ENCODE measurements at regions of chr6 and their contacts with region 1.

Region 1: GRCh38 chr6:44475779-44476434 is 88.4 kb downstream of the CDC5L start:
- DNase-seq: peak; percentile 86
- ATAC-seq: peak; percentile 94
- H3K4me3 Mint-ChIP-seq: no peak overlapping the region
- H3K27ac Mint-ChIP-seq: no peak overlapping the region
- H3K4me1 Mint-ChIP-seq: no peaks in the 10 kb centered on the region
- H3K27me3 Mint-ChIP-seq: no peaks in the 10 kb centered on the region

Region 2: GRCh38 chr6:43105538-43106220 is 1370.2 kb before region 1 on chr6:
- CTCF ChIA-PET with region 1: no interaction called
- POLR2A ChIA-PET with region 1: no interaction called
- intact Hi-C with region 1: no loop called
- DNase-seq: no peak
- ATAC-seq: no peak
- H3K4me3 Mint-ChIP-seq: no peak overlapping the region
- H3K27ac Mint-ChIP-seq: no peak overlapping the region
- H3K4me1 Mint-ChIP-seq: no peaks in the 10 kb centered on the region
- H3K27me3 Mint-ChIP-seq: no peaks in the 10 kb centered on the region

Region 3: GRCh38 chr6:44431118-44431725 is 44.7 kb before region 1 on chr6:
- CTCF ChIA-PET with region 1: interaction called, 15 read pairs
- POLR2A ChIA-PET with region 1: no interaction called
- intact Hi-C with region 1: no loop called
- DNase-seq: peak; percentile 66
- ATAC-seq: peak; percentile 85
- H3K4me3 Mint-ChIP-seq: no peak overlapping the region
- H3K27ac Mint-ChIP-seq: no peak overlapping the region
- H3K4me1 Mint-ChIP-seq: peaks cover 2% of the 10 kb centered on the region
- H3K27me3 Mint-ChIP-seq: no peaks in the 10 kb centered on the region

Region 4: GRCh38 chr6:44489910-44490604 is 14.2 kb after region 1 on chr6:
- CTCF ChIA-PET with region 1: interaction called, 17 read pairs
- POLR2A ChIA-PET with region 1: no interaction called
- intact Hi-C with region 1: no loop called
- DNase-seq: no peak
- ATAC-seq: no peak
- H3K4me3 Mint-ChIP-seq: no peak overlapping the region
- H3K27ac Mint-ChIP-seq: no peak overlapping the region
- H3K4me1 Mint-ChIP-seq: no peaks in the 10 kb centered on the region
- H3K27me3 Mint-ChIP-seq: peaks cover 15% of the 10 kb centered on the region

Region 5: DNA sequence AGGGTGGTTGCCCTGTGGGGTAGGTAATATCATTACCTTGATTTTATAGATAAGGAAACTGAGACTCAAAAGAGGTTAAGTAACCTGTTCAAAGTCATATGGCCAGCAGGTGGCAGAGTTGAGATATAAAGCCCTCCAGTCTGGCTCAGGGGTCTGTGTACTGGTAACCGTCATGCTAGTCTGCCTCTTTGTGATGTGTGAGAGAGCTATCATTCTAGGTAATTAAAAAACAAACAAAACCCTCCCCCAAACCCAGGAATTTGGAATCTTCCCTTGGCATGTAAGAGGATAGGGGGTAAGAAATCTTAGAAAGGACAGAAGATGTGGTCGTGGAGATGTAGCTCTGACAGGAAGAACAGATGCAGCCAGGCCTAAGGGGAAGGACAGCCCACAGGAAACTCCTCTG is 117.6 kb after region 1 on chr6:
- CTCF ChIA-PET with region 1: interaction called, 5 read pairs
- POLR2A ChIA-PET with region 1: no interaction called
- intact Hi-C with region 1: loop called in 1 of 2 experiments (anchors 2 kb)
- DNase-seq: peak; percentile 80
- ATAC-seq: peak; percentile 87
- H3K4me3 Mint-ChIP-seq: no peak overlapping the region
- H3K27ac Mint-ChIP-seq: peak overlapping the region; percentile 9
- H3K4me1 Mint-ChIP-seq: peaks cover 3% of the 10 kb centered on the region
- H3K27me3 Mint-ChIP-seq: peaks cover 11% of the 10 kb centered on the region

Region 6: GRCh38 chr6:44614396-44614795 is 138.5 kb after region 1 on chr6:
- CTCF ChIA-PET with region 1: interaction called, 17 read pairs
- POLR2A ChIA-PET with region 1: no interaction called
- intact Hi-C with region 1: loop called in 1 of 2 experiments (anchors 10 kb)
- DNase-seq: no peak
- ATAC-seq: no peak
- H3K4me3 Mint-ChIP-seq: no peak overlapping the region
- H3K27ac Mint-ChIP-seq: no peak overlapping the region
- H3K4me1 Mint-ChIP-seq: no peaks in the 10 kb centered on the region
- H3K27me3 Mint-ChIP-seq: peaks cover 2% of the 10 kb centered on the region

Region 7: GRCh38 chr6:44655412-44656342 is 179.8 kb after region 1 on chr6:
- CTCF ChIA-PET with region 1: interaction called, 11 read pairs
- POLR2A ChIA-PET with region 1: no interaction called
- intact Hi-C with region 1: loop called in 1 of 2 experiments (anchors 10 kb)
- DNase-seq: peak; percentile 85
- ATAC-seq: peak; percentile 77
- H3K4me3 Mint-ChIP-seq: no peak overlapping the region
- H3K27ac Mint-ChIP-seq: peak overlapping the region; percentile 75
- H3K4me1 Mint-ChIP-seq: peaks cover 13% of the 10 kb centered on the region
- H3K27me3 Mint-ChIP-seq: peaks cover 4% of the 10 kb centered on the region